ENCODE measurements at regions of chr2 and their contacts with region 1.

Region 1: DNA sequence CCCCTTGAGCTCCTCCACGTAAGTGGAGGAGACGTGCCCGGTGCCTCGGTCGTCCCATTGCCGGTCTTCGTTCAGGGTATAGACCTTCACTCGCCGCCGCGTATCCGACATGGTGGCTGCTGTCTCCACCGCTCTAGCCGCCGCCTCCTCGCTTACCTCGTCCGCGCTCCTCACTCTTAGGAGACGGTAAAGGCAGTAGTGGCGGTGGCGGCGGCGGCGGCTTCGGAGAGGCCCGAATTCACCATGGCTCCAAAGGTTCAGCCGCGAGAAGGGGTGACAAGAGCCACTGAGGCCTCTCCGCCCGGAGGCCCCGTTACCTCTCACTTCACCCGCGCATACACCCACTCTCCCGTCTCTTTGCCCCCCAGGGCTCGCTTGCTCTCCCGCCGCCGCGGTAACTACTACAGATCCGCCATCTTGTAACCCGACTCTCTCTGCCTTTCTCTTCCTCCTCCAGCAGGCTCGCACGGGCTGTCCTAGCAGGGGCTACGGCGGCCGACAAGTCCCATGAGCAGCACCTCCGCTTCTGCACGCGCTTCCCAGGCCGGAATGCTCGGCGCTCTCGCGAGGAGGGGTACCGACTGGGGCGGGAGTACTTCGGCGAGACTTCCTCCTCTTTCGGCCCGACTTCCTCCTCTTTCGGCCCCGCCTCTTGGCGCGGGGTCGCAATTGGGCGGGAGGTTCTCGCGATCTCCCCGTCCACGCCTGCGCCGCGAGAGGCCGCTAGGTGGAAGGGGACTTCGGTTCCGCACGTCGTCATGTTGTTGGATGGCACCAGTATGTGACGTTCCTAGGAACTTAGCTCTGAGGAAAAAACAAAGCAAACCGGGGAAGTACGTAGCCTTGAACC is at the start of gene PPP4R3B:
- DNase-seq: peak; percentile 97 to 100 (median 98)
- ATAC-seq: peak; percentile 80
- H3K4me3 ChIP-seq: peak within 1 kb of the TSS; percentile 82
- H3K4me3 Mint-ChIP-seq: no peak within 1 kb of the TSS
- H3K27ac ChIP-seq: peak within 1 kb of the TSS; percentile 98 to 99
- H3K27ac Mint-ChIP-seq: no peak within 1 kb of the TSS
- H3K4me1 ChIP-seq: peaks cover 37% of the 10 kb centered on the region
- H3K4me1 Mint-ChIP-seq: peaks cover 61% of the 10 kb centered on the region
- H3K27me3 ChIP-seq: no peaks in the 10 kb centered on the region
- H3K27me3 Mint-ChIP-seq: no peaks in the 10 kb centered on the region
- CTCF ChIP-seq: peak; percentile 35
- total RNA-seq, gene PPP4R3B: 47.7 to 50.3 TPM

Region 2: GRCh38 chr2:53786705-53787612 is 1830.4 kb before region 1 on chr2 and contains the starts of genes ASB3 and ERLEC1:
- CTCF ChIA-PET with region 1: no interaction called
- POLR2A ChIA-PET with region 1: interaction called, 3 read pairs
- intact Hi-C with region 1: loop called in 1 of 2 experiments (anchors 10 kb)
- DNase-seq: peak; percentile 73 to 93 (median 84)
- ATAC-seq: peak; percentile 87
- H3K4me3 ChIP-seq: peak within 1 kb of the TSS; percentile 83
- H3K4me3 Mint-ChIP-seq: peak within 1 kb of the TSS; percentile 97
- H3K27ac ChIP-seq: peak within 1 kb of the TSS; percentile 79 to 87
- H3K27ac Mint-ChIP-seq: peak within 1 kb of the TSS; percentile 86
- H3K4me1 ChIP-seq: peaks cover 32% of the 10 kb centered on the region
- H3K4me1 Mint-ChIP-seq: peaks cover 59% of the 10 kb centered on the region
- H3K27me3 ChIP-seq: no peaks in the 10 kb centered on the region
- H3K27me3 Mint-ChIP-seq: no peaks in the 10 kb centered on the region
- CTCF ChIP-seq: no peak
- total RNA-seq, gene ASB3: 31.0 to 34.3 TPM
- total RNA-seq, gene ERLEC1: 14.5 to 14.7 TPM

Region 3: DNA sequence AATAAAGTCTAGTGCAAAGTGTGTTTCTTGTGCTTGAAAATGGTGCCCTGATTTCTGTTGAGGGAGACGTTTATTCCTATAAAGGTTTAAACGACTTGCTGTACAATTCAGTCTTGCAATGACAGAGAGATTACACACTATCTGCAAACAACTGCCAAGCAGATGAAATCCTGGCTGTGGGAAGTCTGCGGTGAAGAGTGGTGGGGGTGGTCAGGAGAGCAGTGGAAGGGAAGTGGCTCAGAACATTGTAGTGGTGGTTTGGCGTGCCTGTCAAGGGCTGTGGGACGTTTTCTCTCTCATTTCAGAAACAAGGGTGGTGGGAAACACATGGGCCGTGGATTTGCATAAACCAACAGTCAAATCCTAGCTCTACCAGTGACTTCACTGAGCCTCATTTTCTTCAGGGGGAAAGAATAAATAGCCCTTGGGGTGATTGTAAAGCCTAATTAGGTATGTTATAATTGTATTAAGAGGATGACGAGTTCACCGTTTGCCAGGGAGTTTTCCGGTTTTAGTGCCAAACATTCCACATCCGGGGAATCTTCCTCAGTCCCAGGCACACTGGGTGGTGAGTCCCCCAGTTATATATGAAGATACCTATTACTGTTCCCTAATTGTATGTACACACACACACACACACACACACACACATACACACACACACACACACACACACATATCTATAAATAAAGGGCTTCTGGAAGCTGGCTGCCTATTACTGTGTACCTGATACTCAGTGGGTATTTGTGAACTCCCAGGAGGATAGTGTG is 1046.3 kb before region 1 on chr2:
- CTCF ChIA-PET with region 1: no interaction called
- POLR2A ChIA-PET with region 1: interaction called, 4 read pairs
- intact Hi-C with region 1: loop called (anchors 5 to 10 kb)
- DNase-seq: peak in 12 of 14 experiments; percentile 39 to 87 (median 64)
- ATAC-seq: peak; percentile 14
- H3K4me3 ChIP-seq: peak overlapping the region; percentile 31
- H3K4me3 Mint-ChIP-seq: peak overlapping the region; percentile 81
- H3K27ac ChIP-seq: peak overlapping the region; percentile 89 to 98
- H3K27ac Mint-ChIP-seq: peak overlapping the region; percentile 96
- H3K4me1 ChIP-seq: peaks cover 90% of the 10 kb centered on the region
- H3K4me1 Mint-ChIP-seq: peaks cover 95% of the 10 kb centered on the region
- H3K27me3 ChIP-seq: no peaks in the 10 kb centered on the region
- H3K27me3 Mint-ChIP-seq: no peaks in the 10 kb centered on the region
- CTCF ChIP-seq: no peak

Region 4: GRCh38 chr2:55223958-55224760 is 393.2 kb before region 1 on chr2:
- CTCF ChIA-PET with region 1: interaction called, 3 read pairs
- POLR2A ChIA-PET with region 1: interaction called, 10 read pairs
- intact Hi-C with region 1: no loop called
- DNase-seq: peak in 3 of 14 experiments; percentile 9 to 46 (median 34)
- ATAC-seq: no peak
- H3K4me3 ChIP-seq: peak overlapping the region; percentile 53
- H3K4me3 Mint-ChIP-seq: peak overlapping the region; percentile 87
- H3K27ac ChIP-seq: peak overlapping the region in 1 of 2 donors; percentile 80
- H3K27ac Mint-ChIP-seq: peak overlapping the region; percentile 86
- H3K4me1 ChIP-seq: peaks cover 14% of the 10 kb centered on the region
- H3K4me1 Mint-ChIP-seq: peaks cover 42% of the 10 kb centered on the region
- H3K27me3 ChIP-seq: no peaks in the 10 kb centered on the region
- H3K27me3 Mint-ChIP-seq: no peaks in the 10 kb centered on the region
- CTCF ChIP-seq: no peak

Region 5: GRCh38 chr2:55268907-55269644 is 348.3 kb before region 1 on chr2 and contains the start of gene MTIF2:
- CTCF ChIA-PET with region 1: no interaction called
- POLR2A ChIA-PET with region 1: no interaction called
- intact Hi-C with region 1: loop called in 1 of 2 experiments (anchors 10 kb)
- DNase-seq: peak; percentile 68 to 93 (median 82)
- ATAC-seq: peak; percentile 86
- H3K4me3 ChIP-seq: peak within 1 kb of the TSS; percentile 87
- H3K4me3 Mint-ChIP-seq: peak within 1 kb of the TSS; percentile 96
- H3K27ac ChIP-seq: peak within 1 kb of the TSS; percentile 66 to 84
- H3K27ac Mint-ChIP-seq: peak within 1 kb of the TSS; percentile 95
- H3K4me1 ChIP-seq: peaks cover 15% of the 10 kb centered on the region
- H3K4me1 Mint-ChIP-seq: peaks cover 19% of the 10 kb centered on the region
- H3K27me3 ChIP-seq: no peaks in the 10 kb centered on the region
- H3K27me3 Mint-ChIP-seq: no peaks in the 10 kb centered on the region
- CTCF ChIP-seq: no peak
- total RNA-seq, gene MTIF2: 13.0 to 15.6 TPM

Region 6: DNA sequence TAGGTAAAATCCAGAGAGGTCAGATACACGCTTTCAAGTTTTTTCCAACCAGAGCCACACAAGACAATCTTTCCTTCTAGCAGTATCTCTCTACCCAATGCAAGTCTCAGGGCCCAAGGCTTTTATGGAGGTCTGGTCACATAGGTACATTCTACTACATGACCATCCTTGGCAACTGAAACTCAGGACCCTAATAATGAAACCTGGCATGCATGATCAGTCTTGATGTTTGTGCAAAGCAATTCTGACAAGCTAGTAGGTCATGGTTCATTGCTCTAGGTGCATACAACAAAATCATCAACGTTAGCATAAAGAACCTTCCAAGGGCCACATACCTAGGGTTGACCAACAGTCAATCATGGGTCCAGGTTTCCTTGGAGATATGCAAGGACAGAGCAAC is 164.5 kb before region 1 on chr2:
- CTCF ChIA-PET with region 1: no interaction called
- POLR2A ChIA-PET with region 1: no interaction called
- intact Hi-C with region 1: no loop called
- DNase-seq: no peak
- ATAC-seq: no peak
- H3K4me3 ChIP-seq: no peak overlapping the region
- H3K4me3 Mint-ChIP-seq: no peak overlapping the region
- H3K27ac ChIP-seq: no peak overlapping the region
- H3K27ac Mint-ChIP-seq: no peak overlapping the region
- H3K4me1 ChIP-seq: no peaks in the 10 kb centered on the region
- H3K4me1 Mint-ChIP-seq: no peaks in the 10 kb centered on the region
- H3K27me3 ChIP-seq: no peaks in the 10 kb centered on the region
- H3K27me3 Mint-ChIP-seq: no peaks in the 10 kb centered on the region
- CTCF ChIP-seq: no peak

Region 7: GRCh38 chr2:55519938-55520885 is 97.2 kb before region 1 on chr2:
- CTCF ChIA-PET with region 1: no interaction called
- POLR2A ChIA-PET with region 1: interaction called, 136 read pairs
- intact Hi-C with region 1: loop called (anchors 1 kb)
- DNase-seq: peak; percentile 9 to 63 (median 36)
- ATAC-seq: peak; percentile 32
- H3K4me3 ChIP-seq: peak overlapping the region; percentile 73
- H3K4me3 Mint-ChIP-seq: peak overlapping the region; percentile 96
- H3K27ac ChIP-seq: peak overlapping the region; percentile 86 to 89
- H3K27ac Mint-ChIP-seq: peak overlapping the region; percentile 98
- H3K4me1 ChIP-seq: peaks cover 11% of the 10 kb centered on the region
- H3K4me1 Mint-ChIP-seq: peaks cover 17% of the 10 kb centered on the region
- H3K27me3 ChIP-seq: no peaks in the 10 kb centered on the region
- H3K27me3 Mint-ChIP-seq: no peaks in the 10 kb centered on the region
- CTCF ChIP-seq: no peak

Region 8: GRCh38 chr2:55628931-55629330 is 11.5 kb after region 1 on chr2:
- CTCF ChIA-PET with region 1: no interaction called
- POLR2A ChIA-PET with region 1: interaction called, 12 read pairs
- intact Hi-C with region 1: no loop called
- DNase-seq: no peak
- ATAC-seq: no peak
- H3K4me3 ChIP-seq: no peak overlapping the region
- H3K4me3 Mint-ChIP-seq: no peak overlapping the region
- H3K27ac ChIP-seq: no peak overlapping the region
- H3K27ac Mint-ChIP-seq: no peak overlapping the region
- H3K4me1 ChIP-seq: peaks cover 7% of the 10 kb centered on the region
- H3K4me1 Mint-ChIP-seq: peaks cover 43% of the 10 kb centered on the region
- H3K27me3 ChIP-seq: no peaks in the 10 kb centered on the region
- H3K27me3 Mint-ChIP-seq: no peaks in the 10 kb centered on the region
- CTCF ChIP-seq: no peak